B cell (primary cell): ENCODE measurements at regions of chr17 and their contacts with region 1.

Region 1: GRCh38 chr17:46154151-46154816 is 38.9 kb downstream of the KANSL1 start:
- DNase-seq: no peak
- ATAC-seq: no peak
- H3K4me3 ChIP-seq: no peak overlapping the region
- H3K4me3 Mint-ChIP-seq: peak overlapping the region; percentile 46
- H3K27ac ChIP-seq: peak overlapping the region in 1 of 2 donors; percentile 57
- H3K27ac Mint-ChIP-seq: peak overlapping the region; percentile 32
- H3K4me1 ChIP-seq: peaks cover 42 to 75% of the 10 kb centered on the region in 2 donors
- H3K4me1 Mint-ChIP-seq: peaks cover 82% of the 10 kb centered on the region
- H3K27me3 ChIP-seq: no peaks in the 10 kb centered on the region
- H3K27me3 Mint-ChIP-seq: no peaks in the 10 kb centered on the region
- CTCF ChIP-seq: no peak

Region 2: DNA sequence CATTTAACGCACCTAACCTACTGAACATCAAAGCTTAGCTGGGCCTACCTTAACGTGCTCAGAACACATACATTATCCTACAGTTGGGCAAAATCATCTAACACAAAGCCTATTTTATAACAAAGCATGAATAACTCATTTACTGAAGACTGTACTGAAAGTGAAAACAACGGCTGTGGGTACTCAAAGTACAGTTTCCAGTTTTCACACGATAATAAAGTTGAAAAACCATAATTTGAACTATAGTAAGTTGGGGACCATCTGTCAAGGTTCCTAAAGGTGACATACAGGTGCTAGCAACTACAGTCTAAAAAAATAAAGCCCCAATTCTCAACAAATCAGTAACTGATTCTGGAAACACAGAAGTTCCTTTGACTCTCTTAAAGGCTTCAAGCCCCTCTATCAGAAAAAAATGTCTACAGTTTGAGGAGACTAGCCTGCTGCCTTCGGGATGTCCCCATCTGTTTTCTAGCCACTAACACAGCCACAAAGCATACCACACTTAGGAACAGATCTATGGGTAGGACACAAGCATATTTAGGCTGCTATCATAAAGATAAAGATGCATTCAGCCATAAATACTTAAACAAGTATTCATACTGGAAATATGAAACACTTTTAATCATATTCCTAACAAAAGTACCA is 32.3 kb before region 1 on chr17:
- CTCF ChIA-PET with region 1: no interaction called
- POLR2A ChIA-PET with region 1: no interaction called
- intact Hi-C with region 1: no loop called
- DNase-seq: no peak
- ATAC-seq: no peak
- H3K4me3 ChIP-seq: no peak overlapping the region
- H3K4me3 Mint-ChIP-seq: peak overlapping the region; percentile 30
- H3K27ac ChIP-seq: peak overlapping the region in 1 of 2 donors; percentile 60
- H3K27ac Mint-ChIP-seq: peak overlapping the region; percentile 34
- H3K4me1 ChIP-seq: peaks cover 30 to 31% of the 10 kb centered on the region in 2 donors
- H3K4me1 Mint-ChIP-seq: peaks cover 68% of the 10 kb centered on the region
- H3K27me3 ChIP-seq: no peaks in the 10 kb centered on the region
- H3K27me3 Mint-ChIP-seq: no peaks in the 10 kb centered on the region
- CTCF ChIP-seq: no peak

Region 3: DNA sequence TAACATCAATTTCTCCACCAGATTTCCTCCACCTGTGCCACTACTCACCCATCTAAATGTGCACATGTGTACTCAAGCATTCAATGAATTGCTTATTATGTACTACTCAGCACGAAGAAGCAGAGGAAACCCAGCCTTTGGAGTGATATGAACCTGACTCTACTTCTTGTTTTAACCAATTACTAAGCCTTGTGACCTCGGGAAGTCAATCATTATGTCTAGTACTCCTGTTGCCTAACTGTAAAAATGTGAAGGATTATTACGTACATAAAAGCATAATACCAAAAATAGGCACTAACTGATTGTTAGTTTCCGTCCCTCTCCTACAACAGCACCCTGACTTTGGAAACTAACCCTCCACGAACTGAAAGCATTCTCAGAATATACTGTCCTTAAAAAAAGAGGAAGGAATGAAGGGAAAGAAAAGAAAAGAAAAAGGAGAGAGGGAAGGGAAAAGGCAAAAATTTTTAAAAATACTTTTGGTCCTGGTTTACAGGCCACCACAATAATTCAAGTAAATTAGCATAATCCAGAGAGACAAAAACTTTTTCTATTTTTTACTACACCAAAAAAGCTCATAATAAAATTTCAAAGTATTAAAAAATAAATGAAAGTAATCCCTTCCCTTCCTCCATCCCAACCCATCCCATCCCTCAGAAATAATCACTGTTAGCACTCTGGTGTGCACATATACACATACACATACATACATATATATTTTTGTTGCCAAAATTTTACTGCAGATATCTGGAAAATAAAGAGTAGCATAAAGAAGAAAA is 14.7 kb before region 1 on chr17:
- CTCF ChIA-PET with region 1: interaction called, 8 read pairs
- POLR2A ChIA-PET with region 1: interaction called, 9 read pairs
- intact Hi-C with region 1: loop called (anchors 2 kb)
- DNase-seq: no peak
- ATAC-seq: peak; percentile 35
- H3K4me3 ChIP-seq: no peak overlapping the region
- H3K4me3 Mint-ChIP-seq: peak overlapping the region; percentile 57
- H3K27ac ChIP-seq: peak overlapping the region in 1 of 2 donors; percentile 45
- H3K27ac Mint-ChIP-seq: peak overlapping the region; percentile 15
- H3K4me1 ChIP-seq: peaks cover 48 to 73% of the 10 kb centered on the region in 2 donors
- H3K4me1 Mint-ChIP-seq: peaks cover 84% of the 10 kb centered on the region
- H3K27me3 ChIP-seq: no peaks in the 10 kb centered on the region
- H3K27me3 Mint-ChIP-seq: no peaks in the 10 kb centered on the region
- CTCF ChIP-seq: no peak

Region 4: DNA sequence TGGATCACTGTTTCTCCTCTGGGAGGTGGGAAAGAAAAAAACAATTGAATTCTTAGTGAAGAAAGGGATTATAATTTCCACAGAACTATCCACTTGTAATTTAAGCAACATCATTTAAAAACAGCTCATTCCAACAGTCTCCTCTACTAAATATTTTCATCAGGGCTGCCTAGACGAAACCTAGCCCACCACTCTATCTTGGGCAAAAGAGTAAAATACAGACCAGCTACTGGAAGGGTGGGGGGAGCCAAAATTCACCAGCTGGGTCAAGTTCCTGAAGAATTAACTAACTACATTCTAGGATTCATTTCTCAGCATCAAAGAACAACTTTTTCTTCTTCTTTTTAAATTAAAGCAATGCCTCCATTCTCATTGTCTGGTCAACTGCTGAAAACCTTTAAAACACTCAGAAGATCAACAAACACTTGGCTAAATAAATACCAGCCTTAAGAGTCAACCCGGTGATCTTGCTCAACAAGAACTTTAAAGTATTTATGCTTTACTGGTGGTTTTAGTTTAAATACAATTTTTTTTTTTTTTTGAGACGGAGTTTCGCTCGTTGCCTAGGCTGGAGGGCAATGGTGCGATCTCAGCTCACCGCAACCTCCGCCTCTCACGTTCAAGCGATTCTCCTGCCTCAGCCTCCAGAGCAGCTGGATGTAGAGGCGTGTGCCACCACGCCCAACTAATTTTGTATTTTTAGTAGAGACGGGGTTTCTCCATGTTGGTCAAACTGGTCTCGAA is 13.7 kb after region 1 on chr17:
- CTCF ChIA-PET with region 1: interaction called, 4 read pairs
- POLR2A ChIA-PET with region 1: no interaction called
- intact Hi-C with region 1: loop called (anchors 1 kb)
- DNase-seq: no peak
- ATAC-seq: no peak
- H3K4me3 ChIP-seq: no peak overlapping the region
- H3K4me3 Mint-ChIP-seq: no peak overlapping the region
- H3K27ac ChIP-seq: no peak overlapping the region
- H3K27ac Mint-ChIP-seq: no peak overlapping the region
- H3K4me1 ChIP-seq: peaks cover 9 to 16% of the 10 kb centered on the region in 2 donors
- H3K4me1 Mint-ChIP-seq: peaks cover 68% of the 10 kb centered on the region
- H3K27me3 ChIP-seq: no peaks in the 10 kb centered on the region
- H3K27me3 Mint-ChIP-seq: no peaks in the 10 kb centered on the region
- CTCF ChIP-seq: no peak

Region 5: GRCh38 chr17:47199627-47200324 is 1045.5 kb after region 1 on chr17:
- CTCF ChIA-PET with region 1: no interaction called
- POLR2A ChIA-PET with region 1: interaction called, 12 read pairs
- intact Hi-C with region 1: no loop called
- DNase-seq: peak; percentile 79
- ATAC-seq: peak; percentile 67
- H3K4me3 ChIP-seq: peak overlapping the region; percentile 21 to 45 (median 41)
- H3K4me3 Mint-ChIP-seq: peak overlapping the region; percentile 80
- H3K27ac ChIP-seq: peak overlapping the region; percentile 82 to 90
- H3K27ac Mint-ChIP-seq: peak overlapping the region; percentile 96
- H3K4me1 ChIP-seq: peaks cover 40 to 46% of the 10 kb centered on the region in 2 donors
- H3K4me1 Mint-ChIP-seq: peaks cover 42% of the 10 kb centered on the region
- H3K27me3 ChIP-seq: no peaks in the 10 kb centered on the region
- H3K27me3 Mint-ChIP-seq: no peaks in the 10 kb centered on the region
- CTCF ChIP-seq: no peak